HepG2 (cell line): ENCODE measurements at regions of chr5 and their contacts with region 1.

Region 1: DNA sequence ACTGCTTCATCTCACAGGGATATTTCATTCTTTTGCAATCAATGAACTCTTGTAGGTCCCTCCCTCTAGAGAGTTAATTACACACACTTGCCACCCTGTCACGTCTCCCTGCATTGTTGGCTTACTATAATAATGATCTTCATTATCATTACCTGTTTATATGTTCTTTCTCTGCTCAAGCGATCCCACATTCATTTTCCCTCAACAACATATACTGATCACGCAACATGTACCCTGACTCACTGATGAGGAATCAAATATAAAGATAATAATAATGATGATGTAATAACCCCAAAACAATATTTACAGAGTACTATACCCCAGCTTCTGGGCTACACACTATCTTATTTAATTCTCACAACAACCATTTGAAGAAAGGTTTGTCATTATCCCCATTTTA is 88.5 kb downstream of the FEM1C start:
- DNase-seq: no peak
- ATAC-seq: no peak
- H3K4me3 ChIP-seq: no peak overlapping the region
- H3K27ac ChIP-seq: no peak overlapping the region
- H3K4me1 ChIP-seq: no peaks in the 10 kb centered on the region
- H3K27me3 ChIP-seq: no peaks in the 10 kb centered on the region
- CTCF ChIP-seq: no peak
- EP300 ChIP-seq: no peak
- POLR2A ChIP-seq: no peak
- RAD21 ChIP-seq: no peak

Region 2: DNA sequence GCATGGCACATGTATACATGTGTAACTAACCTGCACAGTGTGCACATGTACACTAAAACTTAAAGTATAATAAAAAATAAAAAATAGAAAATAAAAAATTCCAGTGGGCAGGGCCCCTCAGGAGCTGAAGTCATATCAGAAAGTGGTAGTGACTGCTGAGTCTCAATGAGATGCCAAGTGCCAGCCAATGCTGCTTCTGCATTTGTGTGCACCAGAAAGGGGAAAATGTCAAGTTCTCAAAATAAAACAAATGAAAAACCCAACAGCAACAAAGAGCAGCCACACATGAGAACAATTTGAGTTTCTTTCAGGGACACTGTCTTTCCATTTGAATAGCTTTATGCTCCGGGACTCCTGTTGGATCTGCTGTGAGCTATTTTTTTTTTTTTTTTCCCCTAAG is 42.4 kb before region 1 on chr5:
- CTCF ChIA-PET with region 1: no interaction called
- POLR2A ChIA-PET with region 1: no interaction called
- in situ Hi-C with region 1: no loop called
- intact Hi-C with region 1: no loop called
- DNase-seq: no peak
- ATAC-seq: no peak
- H3K4me3 ChIP-seq: no peak overlapping the region
- H3K27ac ChIP-seq: no peak overlapping the region
- H3K4me1 ChIP-seq: peaks cover 9% of the 10 kb centered on the region; the same call in 1 of the 2 replicates
- H3K27me3 ChIP-seq: peaks cover 0 to 2% of the 10 kb centered on the region in 2 experiments; a peak in 1 of 5 replicates
- CTCF ChIP-seq: no peak
- EP300 ChIP-seq: no peak
- POLR2A ChIP-seq: no peak
- RAD21 ChIP-seq: no peak

Region 3: GRCh38 chr5:115478281-115478680 is 22.2 kb after region 1 on chr5:
- CTCF ChIA-PET with region 1: no interaction called
- POLR2A ChIA-PET with region 1: no interaction called
- in situ Hi-C with region 1: no loop called
- intact Hi-C with region 1: loop called (anchors 1 kb)
- DNase-seq: no peak
- ATAC-seq: no peak
- H3K4me3 ChIP-seq: no peak overlapping the region
- H3K27ac ChIP-seq: no peak overlapping the region
- H3K4me1 ChIP-seq: no peaks in the 10 kb centered on the region
- H3K27me3 ChIP-seq: 0 out of 5 replicates have a peak, but pooled peaks cover 0 to 3% of the 10 kb centered on the region in 2 experiments
- CTCF ChIP-seq: no peak
- EP300 ChIP-seq: no peak
- POLR2A ChIP-seq: no peak
- RAD21 ChIP-seq: no peak